ENCODE measurements at regions of chr4 and their contacts with region 1.

Region 1: DNA sequence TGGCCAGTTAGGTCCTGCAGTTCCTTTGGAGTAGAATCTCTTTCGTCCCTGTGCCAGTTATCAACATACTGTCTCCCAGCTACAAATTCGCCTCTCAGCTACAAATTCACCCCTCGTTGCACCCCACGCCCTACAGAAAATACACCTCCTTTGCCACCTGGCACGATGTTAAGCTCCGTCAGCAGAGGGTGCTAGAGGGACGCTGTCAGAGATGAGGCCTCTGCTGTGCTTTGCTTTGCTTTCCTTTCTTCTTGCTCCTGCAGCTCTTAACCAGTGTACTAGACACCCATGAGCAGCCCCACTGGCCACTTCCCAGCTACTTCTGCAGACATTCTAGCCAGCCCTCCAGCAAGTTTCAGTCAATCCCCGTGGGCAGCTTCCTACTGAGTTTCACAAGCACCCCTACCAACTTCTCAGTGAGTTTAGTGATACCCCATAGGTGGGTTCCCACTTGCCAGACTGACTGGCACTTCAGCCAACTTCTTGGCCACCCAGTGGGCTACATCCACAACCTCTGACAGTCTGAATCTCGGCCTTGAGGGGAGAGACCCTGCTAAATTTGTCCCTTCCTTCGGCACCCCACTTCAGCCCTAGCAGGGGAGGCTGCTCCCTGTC is 21.8 kb downstream of the HAUS3 start:
- H3K4me3 ChIP-seq: no peak overlapping the region
- H3K27ac ChIP-seq: no peak overlapping the region
- H3K4me1 ChIP-seq: no peaks in the 10 kb centered on the region
- CTCF ChIP-seq: peak; percentile 75

Region 2: GRCh38 chr4:2172161-2172560 is 48.0 kb before region 1 on chr4:
- CTCF ChIA-PET with region 1: no interaction called
- POLR2A ChIA-PET with region 1: no interaction called
- H3K4me3 ChIP-seq: no peak overlapping the region
- H3K27ac ChIP-seq: no peak overlapping the region
- H3K4me1 ChIP-seq: no peaks in the 10 kb centered on the region
- CTCF ChIP-seq: no peak

Region 3: GRCh38 chr4:2231082-2231481 is 11.0 kb after region 1 on chr4:
- CTCF ChIA-PET with region 1: interaction called, 13 read pairs
- POLR2A ChIA-PET with region 1: no interaction called
- H3K4me3 ChIP-seq: no peak overlapping the region
- H3K27ac ChIP-seq: no peak overlapping the region
- H3K4me1 ChIP-seq: no peaks in the 10 kb centered on the region
- CTCF ChIP-seq: no peak

Region 4: GRCh38 chr4:2241410-2242353 is 21.6 kb after region 1 on chr4 and contains the starts of genes HAUS3 and POLN:
- CTCF ChIA-PET with region 1: interaction called, 15 read pairs
- POLR2A ChIA-PET with region 1: no interaction called
- H3K4me3 ChIP-seq: peak within 1 kb of the TSS; percentile 81
- H3K27ac ChIP-seq: peak within 1 kb of the TSS; percentile 53
- H3K4me1 ChIP-seq: no peaks in the 10 kb centered on the region; the same call in 1 of the 2 replicates
- CTCF ChIP-seq: 0 out of 2 replicates have a peak, but pooled peaks have one; percentile 35

Measured in HEK293 (cell line).